ENCODE measurements at regions of chr1 and their contacts with region 1.

Region 1: GRCh38 chr1:117512743-117513321 is 93.0 kb upstream of the TENT5C start:
- DNase-seq: no peak
- ATAC-seq: no peak

Region 2: DNA sequence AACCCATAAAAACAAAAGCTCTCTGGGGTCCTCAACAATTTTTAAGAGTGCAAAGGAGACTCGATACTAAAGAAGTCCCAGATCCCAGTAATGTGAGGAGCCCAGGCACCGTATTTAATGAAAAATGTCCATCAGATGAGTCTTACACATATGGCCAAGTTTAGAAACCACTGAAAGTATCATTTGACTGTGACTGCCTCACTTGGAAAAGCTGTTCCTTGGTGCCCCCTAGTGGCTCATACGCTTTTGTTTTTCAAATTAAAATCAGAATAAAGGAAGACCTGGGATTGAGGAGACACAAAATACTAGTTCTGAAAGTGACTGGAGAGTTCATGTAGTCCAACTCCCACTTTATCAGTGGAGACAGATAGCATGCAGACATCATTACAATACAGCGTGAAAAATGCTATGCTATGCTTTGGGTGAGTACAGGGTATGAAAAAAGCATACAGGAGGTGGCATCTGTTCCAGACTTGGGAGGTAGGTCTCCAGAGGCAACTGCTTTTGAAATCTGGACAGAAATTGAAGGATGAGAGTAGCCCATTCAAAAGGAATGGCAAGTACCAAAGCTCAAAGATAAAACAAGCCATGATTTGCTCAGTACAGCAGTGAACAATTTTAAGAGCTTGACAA is 382.8 kb after region 1 on chr1:
- intact Hi-C with region 1: loop called (anchors 10 kb)
- DNase-seq: no peak
- ATAC-seq: no peak

Measured in Right ventricle myocardium inferior (tissue), 1 donor.